GM12878 (cell line): ENCODE measurements at regions of chr16 and their contacts with region 1.

Region 1: GRCh38 chr16:70454222-70455034 is at the start of gene FCSK:
- DNase-seq: no peak
- ATAC-seq: peak; percentile 93
- H3K4me3 ChIP-seq: peak within 1 kb of the TSS; percentile 93
- H3K27ac ChIP-seq: peak within 1 kb of the TSS; percentile 95
- H3K4me1 ChIP-seq: no peaks in the 10 kb centered on the region
- H3K27me3 ChIP-seq: no peaks in the 10 kb centered on the region
- CTCF ChIP-seq: peak; percentile 13 to 22 (median 21); a peak in 3 of 6 replicates
- EP300 ChIP-seq: no peak
- POLR2A ChIP-seq: peak; percentile 74
- RAD21 ChIP-seq: no peak
- polyA plus RNA-seq, gene FCSK: 0.60 to 1.5 TPM

Region 2: GRCh38 chr16:70331588-70332358 is 122.7 kb before region 1 on chr16:
- CTCF ChIA-PET with region 1: no interaction called
- POLR2A ChIA-PET with region 1: no interaction called
- RAD21 ChIA-PET with region 1: no interaction called
- SMC1A ChIA-PET with region 1: no interaction called
- in situ Hi-C with region 1: no loop called
- intact Hi-C with region 1: no loop called
- DNase-seq: no peak
- ATAC-seq: peak; percentile 86
- H3K4me3 ChIP-seq: no peak overlapping the region
- H3K27ac ChIP-seq: no peak overlapping the region
- H3K4me1 ChIP-seq: no peaks in the 10 kb centered on the region
- H3K27me3 ChIP-seq: no peaks in the 10 kb centered on the region
- CTCF ChIP-seq: peak; percentile 36 to 54 (median 40); a peak in 5 of 6 replicates
- EP300 ChIP-seq: no peak
- POLR2A ChIP-seq: no peak
- RAD21 ChIP-seq: peak; percentile 28

Region 3: GRCh38 chr16:70395345-70395901 is 59.0 kb before region 1 on chr16:
- CTCF ChIA-PET with region 1: interaction called, 11 read pairs
- POLR2A ChIA-PET with region 1: interaction called, 3 read pairs
- RAD21 ChIA-PET with region 1: interaction called, 16 read pairs
- SMC1A ChIA-PET with region 1: interaction called, 21 read pairs
- in situ Hi-C with region 1: no loop called
- intact Hi-C with region 1: loop called (anchors 1 kb)
- DNase-seq: no peak
- ATAC-seq: peak; percentile 98
- H3K4me3 ChIP-seq: no peak overlapping the region
- H3K27ac ChIP-seq: no peak overlapping the region
- H3K4me1 ChIP-seq: no peaks in the 10 kb centered on the region; the same call in 1 of the 2 replicates
- H3K27me3 ChIP-seq: no peaks in the 10 kb centered on the region
- CTCF ChIP-seq: peak; percentile 70 to 87 (median 82)
- EP300 ChIP-seq: no peak
- POLR2A ChIP-seq: peak; percentile 21
- RAD21 ChIP-seq: peak; percentile 83

Region 4: GRCh38 chr16:70402916-70403659 is 51.3 kb before region 1 on chr16:
- CTCF ChIA-PET with region 1: interaction called, 14 read pairs
- POLR2A ChIA-PET with region 1: no interaction called
- RAD21 ChIA-PET with region 1: interaction called, 6 read pairs
- SMC1A ChIA-PET with region 1: interaction called, 27 read pairs
- in situ Hi-C with region 1: no loop called
- intact Hi-C with region 1: no loop called
- DNase-seq: no peak
- ATAC-seq: no peak
- H3K4me3 ChIP-seq: no peak overlapping the region
- H3K27ac ChIP-seq: peak overlapping the region; percentile 84
- H3K4me1 ChIP-seq: peaks cover 43% of the 10 kb centered on the region
- H3K27me3 ChIP-seq: no peaks in the 10 kb centered on the region; a peak in 1 of 4 replicates
- CTCF ChIP-seq: no peak
- EP300 ChIP-seq: no peak
- POLR2A ChIP-seq: no peak
- RAD21 ChIP-seq: no peak

Region 5: DNA sequence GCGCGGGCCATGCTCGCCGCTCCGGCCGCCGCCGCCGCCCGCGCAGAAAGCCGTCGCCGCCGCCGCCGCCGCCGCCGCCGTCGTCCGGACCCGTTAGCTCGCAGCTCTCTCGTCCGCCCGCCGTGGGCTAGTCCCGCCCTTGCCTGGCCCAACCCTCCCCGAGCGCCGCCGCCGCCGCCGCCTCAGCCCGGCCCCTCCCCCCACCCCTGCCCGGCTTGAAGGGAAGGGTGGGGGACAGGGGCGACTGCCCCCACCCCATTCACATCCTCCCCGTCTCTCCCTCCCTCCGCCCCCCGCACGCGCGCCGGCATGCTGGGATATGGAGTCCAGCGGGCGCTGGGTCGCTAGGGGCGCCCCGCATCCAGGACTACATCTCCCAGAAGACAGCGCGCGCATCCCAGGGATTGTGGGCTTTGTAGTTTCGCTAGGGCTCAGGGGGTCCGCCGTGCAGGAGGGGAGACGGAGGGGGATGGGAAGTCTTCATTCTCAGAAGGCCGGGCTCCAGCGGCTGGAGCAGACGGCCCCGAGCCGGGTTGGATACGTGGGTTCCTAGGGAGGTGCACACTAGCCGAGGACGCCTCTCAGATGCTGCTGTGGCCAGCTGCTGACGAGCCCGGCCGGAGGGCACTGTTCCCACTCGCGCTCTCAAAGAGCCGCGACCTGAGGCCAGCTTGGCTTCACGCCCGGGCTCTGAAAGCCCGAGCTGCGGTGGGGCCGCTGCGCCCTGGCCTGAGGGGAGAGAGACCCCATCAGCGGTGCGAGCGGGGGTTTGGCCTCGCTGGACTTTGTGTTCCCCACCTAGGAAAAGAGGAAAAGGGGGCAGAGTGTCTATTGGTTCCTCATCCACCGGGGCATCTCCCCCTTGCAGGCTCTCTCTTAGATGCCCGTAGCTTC is 15.2 kb before region 1 on chr16 and contains the start of gene ST3GAL2:
- CTCF ChIA-PET with region 1: interaction called, 25 read pairs
- POLR2A ChIA-PET with region 1: interaction called, 30 read pairs
- RAD21 ChIA-PET with region 1: interaction called, 30 read pairs
- SMC1A ChIA-PET with region 1: interaction called, 36 read pairs
- in situ Hi-C with region 1: no loop called
- intact Hi-C with region 1: loop called (anchors 1 kb)
- DNase-seq: peak; percentile 74
- ATAC-seq: peak; percentile 91
- H3K4me3 ChIP-seq: peak within 1 kb of the TSS; percentile 88
- H3K27ac ChIP-seq: peak within 1 kb of the TSS; percentile 71
- H3K4me1 ChIP-seq: peaks cover 20% of the 10 kb centered on the region
- H3K27me3 ChIP-seq: no peaks in the 10 kb centered on the region
- CTCF ChIP-seq: 0 out of 6 replicates have a peak, but pooled peaks of 1 of the 3 experiments have one; percentile 2
- EP300 ChIP-seq: no peak
- POLR2A ChIP-seq: peak; percentile 67
- RAD21 ChIP-seq: no peak
- polyA plus RNA-seq, gene ST3GAL2: 0.95 to 1.4 TPM

Region 6: GRCh38 chr16:70470927-70471341 is 16.5 kb after region 1 on chr16:
- CTCF ChIA-PET with region 1: interaction called, 3 read pairs
- POLR2A ChIA-PET with region 1: interaction called, 3 read pairs
- RAD21 ChIA-PET with region 1: no interaction called
- SMC1A ChIA-PET with region 1: interaction called, 6 read pairs
- in situ Hi-C with region 1: no loop called
- intact Hi-C with region 1: loop called (anchors 1 kb)
- DNase-seq: no peak
- ATAC-seq: peak; percentile 26; the same call in 2 of the 3 replicates
- H3K4me3 ChIP-seq: no peak overlapping the region
- H3K27ac ChIP-seq: no peak overlapping the region
- H3K4me1 ChIP-seq: peaks cover 9% of the 10 kb centered on the region
- H3K27me3 ChIP-seq: no peaks in the 10 kb centered on the region
- CTCF ChIP-seq: peak in 2 of 3 experiments; percentile 11 to 26; a peak in 1 of 6 replicates
- EP300 ChIP-seq: no peak
- POLR2A ChIP-seq: 0 out of 2 replicates have a peak, but pooled peaks have one; percentile 15
- RAD21 ChIP-seq: peak; percentile 18; the same call in 1 of the 2 replicates